CD8-positive, alpha-beta memory T cell (primary cell): ENCODE measurements at regions of chrX and their contacts with region 1.

Region 1: GRCh38 chrX:47828984-47829383 is 7.7 kb upstream of the ZNF81 start:
- DNase-seq: no peak
- H3K4me3 ChIP-seq: no peak overlapping the region
- H3K4me3 Mint-ChIP-seq: no peak overlapping the region
- H3K27ac ChIP-seq: no peak overlapping the region
- H3K27ac Mint-ChIP-seq: no peak overlapping the region
- H3K4me1 ChIP-seq: no peaks in the 10 kb centered on the region
- H3K4me1 Mint-ChIP-seq: no peaks in the 10 kb centered on the region
- H3K27me3 ChIP-seq: no peaks in the 10 kb centered on the region
- H3K27me3 Mint-ChIP-seq: peaks cover 0 to 5% of the 10 kb centered on the region in 2 donors

Region 2: DNA sequence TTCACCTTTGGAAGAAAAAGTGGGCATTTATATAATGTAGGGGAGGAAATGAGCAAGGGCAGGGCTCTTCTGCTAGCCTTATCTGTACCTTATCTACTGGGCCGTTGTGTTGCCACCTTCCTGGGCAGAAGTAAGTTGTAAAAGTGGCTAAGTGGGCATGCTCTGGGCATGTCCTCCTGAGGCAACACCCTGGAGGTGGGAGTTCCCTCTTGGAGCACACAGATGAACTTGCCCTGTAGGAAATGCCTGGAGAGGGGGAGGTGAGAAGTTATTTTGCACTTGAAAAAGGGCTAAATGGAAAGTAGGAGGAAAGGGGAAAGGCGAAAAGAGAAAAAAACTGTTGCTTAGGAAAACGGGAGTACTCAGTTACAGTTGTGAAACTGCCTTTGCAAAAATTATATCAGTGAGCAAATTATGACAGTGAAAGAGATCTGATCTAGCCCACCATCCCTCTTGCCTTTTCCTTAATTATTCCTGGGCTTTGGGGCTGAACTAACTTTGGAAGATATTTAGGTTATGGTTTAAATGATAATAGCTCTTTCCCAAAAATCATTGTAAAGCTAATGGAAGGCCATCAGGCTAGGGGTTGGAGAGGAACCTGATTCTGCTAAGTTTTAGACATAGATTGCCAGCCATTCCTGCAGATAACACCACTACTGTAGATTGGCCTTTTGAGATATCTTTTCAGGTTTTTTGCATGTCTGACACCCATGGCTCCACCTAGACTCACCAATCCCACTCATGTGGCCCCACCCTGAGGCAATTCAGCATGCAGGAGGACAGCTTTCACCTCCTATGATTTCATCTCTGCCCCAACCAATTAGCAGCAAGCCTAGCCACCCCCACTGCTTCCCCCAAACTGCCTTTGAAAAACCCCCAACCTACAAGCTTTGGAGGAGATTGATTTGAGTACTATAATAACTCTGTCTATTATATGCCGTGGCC is 12.8 kb before region 1 on chrX:
- CTCF ChIA-PET with region 1: no interaction called
- POLR2A ChIA-PET with region 1: no interaction called
- DNase-seq: no peak
- H3K4me3 ChIP-seq: no peak overlapping the region
- H3K4me3 Mint-ChIP-seq: no peak overlapping the region
- H3K27ac ChIP-seq: no peak overlapping the region
- H3K27ac Mint-ChIP-seq: no peak overlapping the region
- H3K4me1 ChIP-seq: no peaks in the 10 kb centered on the region
- H3K4me1 Mint-ChIP-seq: no peaks in the 10 kb centered on the region
- H3K27me3 ChIP-seq: no peaks in the 10 kb centered on the region
- H3K27me3 Mint-ChIP-seq: peaks cover 5 to 24% of the 10 kb centered on the region in 2 donors

Region 3: DNA sequence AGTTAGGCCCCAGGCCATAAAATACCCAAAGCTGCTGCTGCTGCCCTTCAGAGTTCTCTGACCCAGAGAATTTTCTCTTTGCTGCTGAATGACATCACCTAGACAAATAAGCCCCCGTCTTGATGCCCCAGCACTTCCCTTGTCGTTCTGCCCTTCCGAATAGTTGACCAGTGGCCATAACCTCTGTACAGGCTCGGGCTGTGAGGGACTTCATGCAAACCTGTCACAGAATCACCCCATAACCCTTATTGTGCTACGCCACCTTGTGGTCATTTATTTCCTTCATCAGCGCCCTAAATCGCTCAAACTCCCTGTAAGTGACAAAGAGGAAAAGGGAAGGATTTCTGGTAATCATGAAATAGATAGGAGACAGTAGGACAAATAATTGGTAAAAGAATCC is 196.6 kb after region 1 on chrX:
- CTCF ChIA-PET with region 1: interaction called, 13 read pairs
- POLR2A ChIA-PET with region 1: no interaction called
- DNase-seq: peak in 3 of 5 donors; percentile 36 to 54 (median 45)
- H3K4me3 ChIP-seq: no peak overlapping the region
- H3K4me3 Mint-ChIP-seq: peak overlapping the region in 1 of 7 donors; percentile 12
- H3K27ac ChIP-seq: no peak overlapping the region
- H3K27ac Mint-ChIP-seq: peak overlapping the region in 2 of 8 donors; percentile 29 to 78
- H3K4me1 ChIP-seq: no peaks in the 10 kb centered on the region
- H3K4me1 Mint-ChIP-seq: peaks cover 9 to 19% (median 17%) of the 10 kb centered on the region in 3 donors
- H3K27me3 ChIP-seq: no peaks in the 10 kb centered on the region
- H3K27me3 Mint-ChIP-seq: peaks cover 0 to 4% of the 10 kb centered on the region in 2 donors